GM12878 (cell line): ENCODE measurements at regions of chr5 and their contacts with region 1.

Region 1: GRCh38 chr5:78908173-78909061 is 76.7 kb downstream of the ARSB start:
- DNase-seq: no peak
- ATAC-seq: no peak
- H3K4me3 ChIP-seq: no peak overlapping the region
- H3K27ac ChIP-seq: peak overlapping the region; percentile 47
- H3K4me1 ChIP-seq: peaks cover 43% of the 10 kb centered on the region
- H3K27me3 ChIP-seq: no peaks in the 10 kb centered on the region
- CTCF ChIP-seq: no peak
- EP300 ChIP-seq: no peak
- POLR2A ChIP-seq: no peak
- RAD21 ChIP-seq: no peak

Region 2: DNA sequence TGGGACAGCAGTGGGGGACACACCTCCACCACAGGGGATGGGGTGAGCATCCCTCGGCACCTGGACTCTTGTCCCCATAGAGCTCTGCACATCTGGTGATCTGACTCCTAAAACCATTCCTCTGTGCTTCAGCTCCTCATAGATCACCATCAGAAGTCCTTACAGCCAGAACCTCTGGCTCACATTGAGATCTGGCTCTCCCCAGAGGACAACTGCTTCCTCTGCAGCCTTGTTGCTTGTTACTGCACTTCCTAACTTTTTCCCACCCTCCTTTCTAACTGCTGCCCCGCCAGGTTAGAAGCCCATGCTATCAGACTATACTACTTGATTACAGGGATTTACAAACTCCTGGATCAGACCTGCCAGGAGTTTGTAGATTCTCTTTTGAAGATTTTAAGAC is 12.2 kb after region 1 on chr5:
- CTCF ChIA-PET with region 1: interaction called, 7 read pairs
- POLR2A ChIA-PET with region 1: interaction called, 4 read pairs
- RAD21 ChIA-PET with region 1: interaction called, 5 read pairs
- SMC1A ChIA-PET with region 1: interaction called, 48 read pairs
- in situ Hi-C with region 1: no loop called
- intact Hi-C with region 1: no loop called
- DNase-seq: no peak
- ATAC-seq: no peak
- H3K4me3 ChIP-seq: no peak overlapping the region
- H3K27ac ChIP-seq: no peak overlapping the region
- H3K4me1 ChIP-seq: peaks cover 3% of the 10 kb centered on the region; the same call in 1 of the 2 replicates
- H3K27me3 ChIP-seq: no peaks in the 10 kb centered on the region
- CTCF ChIP-seq: peak; percentile 19 to 39 (median 36); a peak in 3 of 6 replicates
- EP300 ChIP-seq: no peak
- POLR2A ChIP-seq: no peak
- RAD21 ChIP-seq: peak; percentile 56

Region 3: GRCh38 chr5:78953092-78953800 is 44.8 kb after region 1 on chr5:
- CTCF ChIA-PET with region 1: interaction called, 268 read pairs
- POLR2A ChIA-PET with region 1: no interaction called
- RAD21 ChIA-PET with region 1: no interaction called
- SMC1A ChIA-PET with region 1: interaction called, 5 read pairs
- in situ Hi-C with region 1: no loop called
- intact Hi-C with region 1: loop called (anchors 2 kb)
- DNase-seq: no peak
- ATAC-seq: peak; percentile 92
- H3K4me3 ChIP-seq: no peak overlapping the region
- H3K27ac ChIP-seq: peak overlapping the region; percentile 55; the same call in 1 of the 2 replicates
- H3K4me1 ChIP-seq: peaks cover 20% of the 10 kb centered on the region
- H3K27me3 ChIP-seq: no peaks in the 10 kb centered on the region
- CTCF ChIP-seq: no peak
- EP300 ChIP-seq: no peak
- POLR2A ChIP-seq: no peak
- RAD21 ChIP-seq: no peak

Region 4: GRCh38 chr5:78964887-78965286 is 56.5 kb after region 1 on chr5:
- CTCF ChIA-PET with region 1: interaction called, 268 read pairs
- POLR2A ChIA-PET with region 1: interaction called, 3 read pairs
- RAD21 ChIA-PET with region 1: interaction called, 8 read pairs
- SMC1A ChIA-PET with region 1: interaction called, 143 read pairs
- in situ Hi-C with region 1: no loop called
- intact Hi-C with region 1: no loop called
- DNase-seq: no peak
- ATAC-seq: peak; percentile 88
- H3K4me3 ChIP-seq: no peak overlapping the region
- H3K27ac ChIP-seq: no peak overlapping the region
- H3K4me1 ChIP-seq: no peaks in the 10 kb centered on the region
- H3K27me3 ChIP-seq: no peaks in the 10 kb centered on the region
- CTCF ChIP-seq: peak; percentile 43 to 70 (median 45); a peak in 4 of 6 replicates
- EP300 ChIP-seq: no peak
- POLR2A ChIP-seq: no peak
- RAD21 ChIP-seq: peak; percentile 92